ENCODE measurements at regions of chr3 and their contacts with region 1.

Region 1: DNA sequence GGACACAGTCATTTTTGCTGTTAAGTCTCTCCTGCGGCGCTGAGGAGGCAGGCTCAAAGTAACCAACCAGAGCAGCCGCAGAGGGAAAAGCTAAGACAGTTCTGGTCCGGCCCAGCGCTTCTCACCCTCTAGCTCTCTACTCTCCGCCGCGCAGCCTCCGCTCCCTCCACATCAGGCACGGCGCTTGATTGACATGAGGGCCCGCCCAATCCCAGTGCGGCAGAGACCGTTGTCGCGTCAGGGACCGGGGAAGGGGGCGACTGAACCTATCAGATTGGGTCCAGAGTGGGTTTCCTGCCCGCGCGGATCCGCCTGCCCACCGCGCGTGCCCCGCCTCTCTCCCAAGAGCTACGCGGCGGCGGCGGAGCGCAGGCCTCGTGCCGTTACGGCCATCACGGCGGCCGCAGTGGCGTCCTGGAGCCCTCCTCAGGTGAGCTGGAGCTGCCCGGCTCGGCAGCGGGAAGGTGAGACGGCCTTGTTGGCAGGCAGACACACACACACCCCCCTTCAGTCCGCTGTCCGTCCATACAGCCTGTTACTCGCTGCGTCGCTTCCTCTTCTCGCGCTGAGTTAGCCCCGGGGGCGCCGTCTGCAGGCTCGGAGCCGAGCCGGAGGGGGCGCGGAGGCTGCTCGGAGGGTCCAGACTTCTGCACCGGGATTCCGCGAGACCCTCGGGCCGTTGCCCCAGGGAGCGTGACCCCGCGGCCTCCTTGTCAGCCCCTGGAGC is at the start of gene NCK1:
- DNase-seq: peak; percentile 94
- ATAC-seq: peak; percentile 97
- H3K4me3 ChIP-seq: peak within 1 kb of the TSS; percentile 89 to 97
- H3K27ac ChIP-seq: peak within 1 kb of the TSS; percentile 90
- H3K4me1 ChIP-seq: peaks cover 9 to 20% of the 10 kb centered on the region in 2 experiments; a peak in 3 of 4 replicates
- H3K27me3 ChIP-seq: no peaks in the 10 kb centered on the region
- CTCF ChIP-seq: peak in 2 of 3 experiments; percentile 12 to 17; a peak in 3 of 6 replicates
- POLR2A ChIP-seq: peak; percentile 82
- RAD21 ChIP-seq: peak; percentile 20; the same call in 1 of the 2 replicates
- total RNA-seq, gene NCK1: 25.6 TPM

Region 2: GRCh38 chr3:136955813-136956212 is 93.8 kb after region 1 on chr3:
- CTCF ChIA-PET with region 1: no interaction called
- POLR2A ChIA-PET with region 1: interaction called, 4 read pairs
- RAD21 ChIA-PET with region 1: interaction called in 1 of 2 experiments, 3 read pairs
- intact Hi-C with region 1: loop called (anchors 5 kb)
- DNase-seq: peak; percentile 77
- ATAC-seq: peak; percentile 93
- H3K4me3 ChIP-seq: peak overlapping the region in 1 of 2 experiments; percentile 42; a peak in 2 of 4 replicates
- H3K27ac ChIP-seq: peak overlapping the region; percentile 26
- H3K4me1 ChIP-seq: peaks cover 32 to 56% of the 10 kb centered on the region in 2 experiments
- H3K27me3 ChIP-seq: no peaks in the 10 kb centered on the region
- CTCF ChIP-seq: no peak
- POLR2A ChIP-seq: no peak
- RAD21 ChIP-seq: peak; percentile 21

Measured in HCT116 (cell line).